ENCODE measurements at regions of chr18 and their contacts with region 1.

Region 1: DNA sequence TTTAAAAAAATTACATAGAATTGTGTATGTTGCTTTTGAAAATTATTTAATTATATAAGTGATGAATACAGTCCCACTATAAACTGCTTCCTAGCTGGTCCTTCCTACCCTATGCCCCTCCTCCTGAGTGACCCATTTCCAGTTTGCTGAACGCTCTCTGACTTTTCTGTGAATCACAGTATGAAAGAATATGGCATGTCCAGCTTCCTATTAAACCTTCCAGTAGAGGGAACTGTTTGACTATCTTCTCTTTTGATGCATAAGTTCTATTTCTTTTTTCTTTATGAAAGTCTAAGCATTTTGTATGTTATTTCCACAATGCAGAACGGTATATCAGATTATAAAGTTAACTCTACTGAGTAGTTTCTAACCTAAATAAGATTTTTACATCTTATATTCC is 41.3 kb downstream of the PSMG2 start:
- DNase-seq: peak; percentile 63
- H3K4me3 Mint-ChIP-seq: no peak overlapping the region
- H3K27ac Mint-ChIP-seq: no peak overlapping the region
- H3K4me1 Mint-ChIP-seq: peaks cover 17% of the 10 kb centered on the region
- H3K27me3 Mint-ChIP-seq: no peaks in the 10 kb centered on the region
- CTCF ChIP-seq: peak; percentile 43

Region 2: GRCh38 chr18:12391618-12392165 is 352.4 kb before region 1 on chr18:
- CTCF ChIA-PET with region 1: interaction called, 4 read pairs
- POLR2A ChIA-PET with region 1: no interaction called
- intact Hi-C with region 1: loop called (anchors 2 kb)
- DNase-seq: peak; percentile 75
- H3K4me3 Mint-ChIP-seq: no peak overlapping the region
- H3K27ac Mint-ChIP-seq: no peak overlapping the region
- H3K4me1 Mint-ChIP-seq: peaks cover 6% of the 10 kb centered on the region
- H3K27me3 Mint-ChIP-seq: no peaks in the 10 kb centered on the region
- CTCF ChIP-seq: peak; percentile 91

Region 3: DNA sequence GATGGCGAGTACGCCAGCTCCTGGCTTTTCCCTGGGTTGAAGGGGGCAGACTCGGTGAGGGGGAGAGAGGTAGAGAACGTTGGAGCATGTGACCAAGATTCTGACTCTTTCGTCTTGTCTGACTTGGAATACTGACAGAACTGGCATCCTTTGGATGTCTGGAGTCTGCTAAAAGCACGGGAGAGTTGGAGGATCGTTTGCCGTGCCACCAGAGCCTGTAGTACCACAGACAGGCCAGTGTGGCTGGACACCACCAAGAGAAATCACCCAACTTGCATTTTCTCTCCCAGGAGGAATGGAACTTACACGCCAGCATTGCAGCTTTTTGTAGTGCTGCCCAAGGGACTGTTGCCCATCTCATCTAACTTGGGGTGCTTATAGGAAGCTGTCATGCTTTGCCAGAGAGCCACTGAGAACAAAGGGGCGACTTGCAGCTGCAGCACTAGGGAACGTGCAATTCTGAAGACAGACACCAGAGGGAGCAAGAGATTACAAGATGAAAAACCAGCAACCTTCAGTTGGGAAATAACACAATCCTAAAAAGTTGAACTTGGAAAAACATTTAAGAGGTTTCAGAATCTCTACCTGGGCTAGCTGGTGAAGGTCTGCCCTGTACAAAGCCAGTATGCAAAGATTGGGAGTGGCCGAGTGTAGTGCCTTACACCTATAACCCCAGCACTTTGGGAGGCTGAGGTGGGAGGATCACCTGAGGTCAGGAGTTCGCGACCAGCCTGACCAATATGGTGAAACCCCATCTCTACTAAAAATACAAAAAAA is 17.1 kb before region 1 on chr18:
- CTCF ChIA-PET with region 1: interaction called, 38 read pairs
- POLR2A ChIA-PET with region 1: interaction called, 12 read pairs
- intact Hi-C with region 1: no loop called
- DNase-seq: peak; percentile 67
- H3K4me3 Mint-ChIP-seq: no peak overlapping the region
- H3K27ac Mint-ChIP-seq: no peak overlapping the region
- H3K4me1 Mint-ChIP-seq: peaks cover 7% of the 10 kb centered on the region
- H3K27me3 Mint-ChIP-seq: no peaks in the 10 kb centered on the region
- CTCF ChIP-seq: peak; percentile 87

Region 4: DNA sequence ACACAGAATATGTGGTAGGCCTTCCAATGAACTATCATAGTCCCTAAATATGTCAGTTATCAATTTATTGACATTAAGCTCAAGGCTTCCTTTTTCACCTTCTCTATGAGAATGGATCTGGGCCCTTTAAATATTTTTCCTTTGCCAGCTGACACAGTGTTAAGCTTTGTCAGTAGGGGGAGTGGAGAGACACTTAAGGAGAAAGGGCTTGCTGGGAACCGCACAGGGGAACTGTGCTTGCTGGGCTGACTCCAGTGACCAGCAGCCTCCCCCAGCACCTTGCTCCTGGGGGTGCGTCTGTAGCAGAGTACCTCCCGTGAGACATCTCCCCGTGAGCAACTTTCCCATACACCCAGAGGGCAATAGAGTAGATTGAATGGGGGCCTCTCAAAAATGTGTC is 146.4 kb after region 1 on chr18:
- CTCF ChIA-PET with region 1: interaction called, 152 read pairs
- POLR2A ChIA-PET with region 1: interaction called, 36 read pairs
- intact Hi-C with region 1: loop called (anchors 1 kb)
- DNase-seq: peak; percentile 51
- H3K4me3 Mint-ChIP-seq: no peak overlapping the region
- H3K27ac Mint-ChIP-seq: peak overlapping the region; percentile 85
- H3K4me1 Mint-ChIP-seq: peaks cover 5% of the 10 kb centered on the region
- H3K27me3 Mint-ChIP-seq: no peaks in the 10 kb centered on the region
- CTCF ChIP-seq: no peak

Region 5: GRCh38 chr18:12960853-12961397 is 216.8 kb after region 1 on chr18:
- CTCF ChIA-PET with region 1: no interaction called
- POLR2A ChIA-PET with region 1: no interaction called
- intact Hi-C with region 1: no loop called
- DNase-seq: no peak
- H3K4me3 Mint-ChIP-seq: no peak overlapping the region
- H3K27ac Mint-ChIP-seq: peak overlapping the region; percentile 51
- H3K4me1 Mint-ChIP-seq: no peaks in the 10 kb centered on the region
- H3K27me3 Mint-ChIP-seq: no peaks in the 10 kb centered on the region
- CTCF ChIP-seq: no peak

Region 6: GRCh38 chr18:13159579-13159978 is 415.5 kb after region 1 on chr18:
- CTCF ChIA-PET with region 1: interaction called, 4 read pairs
- POLR2A ChIA-PET with region 1: no interaction called
- intact Hi-C with region 1: loop called (anchors 1 kb)
- DNase-seq: peak; percentile 69
- H3K4me3 Mint-ChIP-seq: no peak overlapping the region
- H3K27ac Mint-ChIP-seq: no peak overlapping the region
- H3K4me1 Mint-ChIP-seq: no peaks in the 10 kb centered on the region
- H3K27me3 Mint-ChIP-seq: peaks cover 12% of the 10 kb centered on the region
- CTCF ChIP-seq: peak; percentile 78

Measured in MCF 10A (cell line).